PC-3 (cell line): ENCODE measurements at regions of chr17 and their contacts with region 1.

Region 1: DNA sequence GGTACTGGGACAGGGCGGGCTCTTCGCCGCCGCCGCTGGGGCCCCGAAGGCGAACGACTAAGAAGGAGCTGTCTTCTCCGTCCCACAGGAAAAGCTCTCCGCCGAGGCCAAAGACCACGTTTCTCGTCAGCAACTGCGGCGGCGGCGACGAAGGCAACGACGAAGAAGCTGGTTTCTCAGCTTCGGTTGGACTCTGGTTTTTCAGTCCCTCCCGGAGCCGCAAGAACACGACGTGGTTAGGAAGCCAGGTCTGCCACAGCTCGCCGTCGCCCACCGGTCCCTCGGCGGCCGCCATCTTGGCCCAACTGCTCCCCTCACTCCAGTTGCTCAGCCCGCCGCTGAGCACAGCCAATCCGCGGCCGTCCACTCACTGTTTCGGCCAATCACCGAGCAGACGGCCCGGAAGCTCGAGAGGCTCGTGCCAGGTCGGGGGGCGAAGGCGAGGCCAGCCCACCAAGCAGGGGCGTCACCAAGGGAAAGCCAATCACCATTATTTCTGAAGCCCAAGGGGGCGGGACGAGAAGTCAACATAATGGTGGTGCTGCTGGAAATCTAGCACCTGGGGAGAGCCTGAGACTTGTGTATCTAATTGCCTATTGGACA is at the start of gene NUP88:
- DNase-seq: peak; percentile 95
- ATAC-seq: peak; percentile 87
- H3K4me3 ChIP-seq: peak within 1 kb of the TSS; percentile 81
- H3K27ac ChIP-seq: peak within 1 kb of the TSS; percentile 79
- H3K4me1 ChIP-seq: peaks cover 31% of the 10 kb centered on the region
- H3K27me3 ChIP-seq: no peaks in the 10 kb centered on the region
- CTCF ChIP-seq: no peak
- total RNA-seq, gene NUP88: 83.6 and 103 TPM in 2 replicates

Region 2: DNA sequence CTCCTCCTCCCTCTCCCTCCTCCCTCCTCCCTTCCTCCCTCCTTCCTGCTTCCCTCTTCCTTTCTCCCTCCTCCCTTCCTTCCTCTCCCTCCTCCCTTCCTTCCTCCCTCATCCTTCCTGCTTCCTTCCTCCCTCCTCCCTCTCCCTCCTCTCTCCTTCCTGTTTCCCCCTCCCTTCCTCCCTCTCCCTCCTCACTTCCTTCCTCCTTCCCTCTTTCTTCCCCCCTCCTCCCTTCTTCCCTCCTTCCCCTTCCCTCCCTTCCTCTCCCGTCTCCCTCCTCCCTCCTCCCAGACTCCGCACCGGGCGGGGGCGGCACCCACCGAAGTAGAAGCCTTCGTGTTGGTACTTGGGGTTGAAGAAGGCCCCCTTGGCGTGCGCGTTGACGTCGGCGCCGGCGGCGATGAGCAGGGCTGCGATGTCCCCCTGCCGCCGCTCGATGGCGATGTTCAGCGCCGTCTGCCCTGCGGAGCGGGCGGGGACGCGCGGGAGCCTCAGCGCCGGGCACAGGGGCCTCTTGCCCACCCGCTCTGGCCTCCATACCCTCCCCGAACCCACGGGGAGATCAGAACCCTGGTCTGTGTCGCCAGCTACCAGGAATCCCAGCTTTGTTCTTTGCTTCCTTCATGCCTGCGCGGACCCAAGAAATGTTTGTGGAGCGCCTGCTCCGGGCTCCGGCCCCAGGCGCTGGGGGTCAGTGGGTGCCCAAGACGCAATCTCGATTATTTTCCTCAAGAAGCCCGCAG is 1884.0 kb before region 1 on chr17:
- CTCF ChIA-PET with region 1: interaction called, 10 read pairs
- POLR2A ChIA-PET with region 1: no interaction called
- intact Hi-C with region 1: no loop called
- DNase-seq: peak; percentile 77
- ATAC-seq: peak; percentile 74
- H3K4me3 ChIP-seq: peak overlapping the region; percentile 61
- H3K27ac ChIP-seq: peak overlapping the region; percentile 67
- H3K4me1 ChIP-seq: peaks cover 3% of the 10 kb centered on the region; the same call in 1 of the 2 replicates
- H3K27me3 ChIP-seq: no peaks in the 10 kb centered on the region
- CTCF ChIP-seq: peak; percentile 74

Region 3: GRCh38 chr17:5396612-5397011 is 22.8 kb before region 1 on chr17:
- CTCF ChIA-PET with region 1: no interaction called
- POLR2A ChIA-PET with region 1: no interaction called
- intact Hi-C with region 1: no loop called
- DNase-seq: no peak
- ATAC-seq: no peak
- H3K4me3 ChIP-seq: no peak overlapping the region
- H3K27ac ChIP-seq: no peak overlapping the region
- H3K4me1 ChIP-seq: no peaks in the 10 kb centered on the region
- H3K27me3 ChIP-seq: no peaks in the 10 kb centered on the region
- CTCF ChIP-seq: no peak

Region 4: DNA sequence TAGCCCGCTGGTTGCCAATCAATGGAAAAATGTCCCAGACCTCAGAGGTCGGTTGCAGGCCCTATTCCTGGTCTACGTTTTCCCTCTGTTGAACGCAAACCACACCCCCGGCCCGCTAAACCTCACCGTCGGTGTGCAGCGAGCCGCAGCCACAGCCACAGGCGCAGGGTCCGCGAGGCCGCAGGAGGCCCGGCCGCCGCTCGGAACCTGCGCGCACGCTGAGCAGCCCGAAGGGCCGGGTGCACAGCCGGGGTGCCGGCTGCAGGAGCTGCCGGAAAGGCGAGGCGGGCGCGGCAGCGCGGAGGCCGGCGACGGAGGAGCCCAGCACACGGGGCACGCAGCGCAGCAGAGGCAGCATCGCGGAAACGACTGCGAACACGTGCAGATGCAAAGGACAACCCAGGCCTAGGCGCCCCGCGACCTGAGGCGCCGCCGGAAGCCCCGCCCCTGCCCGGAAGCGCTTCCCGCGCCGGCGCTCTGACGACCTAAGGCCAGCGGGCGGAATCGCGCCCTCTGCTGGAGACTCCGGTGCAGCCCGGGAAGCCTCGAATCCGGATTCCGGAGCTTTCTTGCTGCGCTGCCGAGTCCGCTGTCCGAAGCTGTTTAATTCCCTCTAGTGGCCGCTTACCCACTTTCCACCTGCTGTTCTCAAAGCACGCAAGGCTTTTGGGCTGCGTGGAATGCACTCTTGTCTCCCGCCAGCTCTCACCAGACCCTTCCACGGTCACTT is 19.4 kb after region 1 on chr17 and contains the start of gene C1QBP:
- CTCF ChIA-PET with region 1: interaction called, 8 read pairs
- POLR2A ChIA-PET with region 1: interaction called, 6 read pairs
- intact Hi-C with region 1: loop called (anchors 1 kb)
- DNase-seq: peak; percentile 94
- ATAC-seq: peak; percentile 86
- H3K4me3 ChIP-seq: peak within 1 kb of the TSS; percentile 99
- H3K27ac ChIP-seq: peak within 1 kb of the TSS; percentile 62
- H3K4me1 ChIP-seq: peaks cover 20% of the 10 kb centered on the region
- H3K27me3 ChIP-seq: no peaks in the 10 kb centered on the region
- CTCF ChIP-seq: peak; percentile 85
- total RNA-seq, gene C1QBP: 303 and 308 TPM in 2 replicates